K562 (cell line): ENCODE measurements at regions of chr10 and their contacts with region 1.

Region 1: GRCh38 chr10:93039721-93040120 is 20.9 kb upstream of the CYP26C1 start:
- DNase-seq: peak in 2 of 4 experiments; percentile 18 to 47
- ATAC-seq: peak; percentile 87
- H3K4me3 ChIP-seq: no peak overlapping the region
- H3K27ac ChIP-seq: no peak overlapping the region
- H3K4me1 ChIP-seq: no peaks in the 10 kb centered on the region; a peak in 2 of 5 replicates
- H3K27me3 ChIP-seq: no peaks in the 10 kb centered on the region
- CTCF ChIP-seq: peak; percentile 53 to 67 (median 67)
- EP300 ChIP-seq: no peak
- POLR2A ChIP-seq: no peak
- RAD21 ChIP-seq: peak; percentile 9 to 76; a peak in 2 of 4 replicates

Region 2: GRCh38 chr10:92965314-92965713 is 74.4 kb before region 1 on chr10:
- CTCF ChIA-PET with region 1: interaction called, 4 read pairs
- POLR2A ChIA-PET with region 1: no interaction called
- in situ Hi-C with region 1: no loop called
- intact Hi-C with region 1: loop called (anchors 1 kb)
- DNase-seq: peak; percentile 5 to 51 (median 9)
- ATAC-seq: no peak
- H3K4me3 ChIP-seq: no peak overlapping the region
- H3K27ac ChIP-seq: no peak overlapping the region
- H3K4me1 ChIP-seq: no peaks in the 10 kb centered on the region; a peak in 1 of 5 replicates
- H3K27me3 ChIP-seq: no peaks in the 10 kb centered on the region
- CTCF ChIP-seq: peak; percentile 27 to 65 (median 32); a peak in 3 of 6 replicates
- EP300 ChIP-seq: no peak
- POLR2A ChIP-seq: no peak
- RAD21 ChIP-seq: peak; percentile 21 to 66; a peak in 3 of 4 replicates

Region 3: DNA sequence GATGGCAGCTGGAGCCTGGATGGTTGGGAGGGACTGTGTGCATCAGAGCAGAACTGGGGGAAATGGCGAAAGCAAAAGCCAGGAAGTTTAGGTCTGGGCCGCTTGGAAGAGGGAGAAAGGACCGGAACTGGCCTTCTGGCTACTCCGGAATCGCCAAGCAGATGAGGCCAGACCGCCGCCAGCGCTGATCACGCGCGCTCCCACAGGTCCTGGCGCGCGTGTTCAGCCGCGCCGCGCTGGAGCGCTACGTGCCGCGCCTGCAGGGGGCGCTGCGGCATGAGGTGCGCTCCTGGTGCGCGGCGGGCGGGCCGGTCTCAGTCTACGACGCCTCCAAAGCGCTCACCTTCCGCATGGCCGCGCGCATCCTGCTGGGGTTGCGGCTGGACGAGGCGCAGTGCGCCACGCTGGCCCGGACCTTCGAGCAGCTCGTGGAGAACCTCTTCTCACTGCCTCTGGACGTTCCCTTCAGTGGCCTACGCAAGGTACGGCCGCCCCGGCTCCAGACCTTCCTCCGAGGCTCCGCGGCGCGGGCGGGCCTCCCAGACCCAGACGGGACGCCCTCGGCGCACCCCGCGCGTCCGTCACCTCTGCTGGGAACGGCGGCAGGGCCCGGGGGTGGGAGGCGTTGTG is 22.9 kb after region 1 on chr10:
- CTCF ChIA-PET with region 1: no interaction called
- POLR2A ChIA-PET with region 1: no interaction called
- in situ Hi-C with region 1: no loop called
- intact Hi-C with region 1: no loop called
- DNase-seq: no peak
- ATAC-seq: no peak
- H3K4me3 ChIP-seq: no peak overlapping the region
- H3K27ac ChIP-seq: no peak overlapping the region
- H3K4me1 ChIP-seq: no peaks in the 10 kb centered on the region; a peak in 1 of 5 replicates
- H3K27me3 ChIP-seq: no peaks in the 10 kb centered on the region
- CTCF ChIP-seq: no peak
- EP300 ChIP-seq: no peak
- POLR2A ChIP-seq: no peak
- RAD21 ChIP-seq: no peak

Region 4: DNA sequence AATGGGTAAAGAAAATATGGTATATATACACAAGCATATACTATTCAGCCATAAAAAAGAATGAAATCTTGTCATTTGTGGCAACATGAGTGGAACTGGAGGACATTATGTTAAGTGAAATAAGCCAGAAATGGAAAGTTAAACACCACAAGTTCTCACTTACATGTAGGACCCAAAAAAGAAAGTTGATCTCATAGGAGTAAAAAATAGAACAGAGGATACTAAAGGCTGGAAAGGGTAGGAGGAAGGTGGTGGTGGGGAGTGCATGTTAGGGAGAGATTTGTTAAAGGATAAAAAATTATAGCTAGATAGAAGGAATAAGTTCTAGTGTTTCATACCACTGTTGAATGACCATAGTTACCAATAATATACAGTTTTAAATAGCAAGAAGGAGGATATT is 1411.1 kb after region 1 on chr10:
- CTCF ChIA-PET with region 1: no interaction called
- POLR2A ChIA-PET with region 1: no interaction called
- in situ Hi-C with region 1: no loop called
- intact Hi-C with region 1: no loop called
- DNase-seq: no peak
- ATAC-seq: no peak
- H3K4me3 ChIP-seq: no peak overlapping the region
- H3K27ac ChIP-seq: no peak overlapping the region
- H3K4me1 ChIP-seq: no peaks in the 10 kb centered on the region
- H3K27me3 ChIP-seq: no peaks in the 10 kb centered on the region
- CTCF ChIP-seq: no peak
- EP300 ChIP-seq: no peak
- POLR2A ChIP-seq: no peak
- RAD21 ChIP-seq: no peak